Panc1 (cell line): ENCODE measurements at regions of chr10 and their contacts with region 1.

Region 1: GRCh38 chr10:44974628-44975431 is 3.8 kb downstream of the DEPP1 start:
- DNase-seq: no peak
- ATAC-seq: peak; percentile 84
- H3K4me3 ChIP-seq: peak overlapping the region; percentile 46 to 65
- H3K27ac ChIP-seq: peak overlapping the region; percentile 96
- H3K4me1 ChIP-seq: peaks cover 57% of the 10 kb centered on the region
- H3K27me3 ChIP-seq: no peaks in the 10 kb centered on the region
- CTCF ChIP-seq: peak; percentile 100

Region 2: DNA sequence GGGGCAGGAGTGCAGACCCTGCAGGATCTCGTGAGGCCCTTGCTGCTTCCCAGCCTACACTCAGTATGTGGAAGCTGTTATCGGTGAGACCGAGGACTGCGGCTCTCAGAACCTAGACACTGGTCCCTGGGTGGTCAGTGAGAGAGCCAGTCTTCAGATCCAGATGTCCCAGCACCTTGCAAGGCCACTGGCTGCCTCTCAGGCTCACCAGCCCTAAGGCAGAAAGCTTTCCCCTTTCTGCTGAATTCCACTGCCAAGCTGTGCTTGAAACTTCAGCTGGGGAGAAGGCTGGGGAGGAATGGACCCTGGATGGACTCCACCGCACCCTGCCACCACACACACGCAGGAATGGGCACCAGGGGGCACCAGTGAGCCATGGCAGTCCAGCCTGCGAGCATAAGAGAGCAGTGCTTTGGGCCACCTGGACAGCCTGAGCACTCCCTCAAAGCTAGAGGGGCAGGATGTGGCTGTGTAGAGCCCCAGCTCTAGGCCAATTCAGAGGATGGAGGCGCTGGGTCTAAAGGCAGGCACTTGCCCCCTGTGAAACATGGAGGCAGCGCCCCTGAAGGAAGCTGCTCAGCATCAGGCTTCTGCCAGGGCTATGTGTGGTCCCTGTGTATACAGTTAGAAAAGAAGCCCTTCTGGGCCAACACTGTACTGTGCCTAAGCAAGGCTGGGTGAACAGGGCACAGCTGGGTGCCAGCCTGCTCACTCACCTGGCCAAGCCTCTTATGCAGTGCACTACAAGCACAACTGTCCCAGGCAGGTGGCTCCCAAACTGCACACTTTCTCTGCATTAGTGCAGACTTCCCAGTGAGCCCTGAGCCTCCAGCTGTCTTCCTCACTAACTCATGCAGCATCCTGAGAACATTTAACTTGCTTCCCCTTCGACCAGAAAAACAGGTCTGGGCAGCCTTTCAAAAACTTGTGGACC is 42.0 kb before region 1 on chr10:
- CTCF ChIA-PET with region 1: interaction called, 17 read pairs
- POLR2A ChIA-PET with region 1: no interaction called
- in situ Hi-C with region 1: no loop called
- intact Hi-C with region 1: loop called (anchors 2 kb)
- DNase-seq: peak; percentile 61
- ATAC-seq: peak; percentile 98
- H3K4me3 ChIP-seq: no peak overlapping the region
- H3K27ac ChIP-seq: peak overlapping the region; percentile 19; the same call in 1 of the 2 replicates
- H3K4me1 ChIP-seq: 0 out of 2 replicates have a peak, but pooled peaks cover 3% of the 10 kb centered on the region
- H3K27me3 ChIP-seq: no peaks in the 10 kb centered on the region
- CTCF ChIP-seq: peak; percentile 100